Common myeloid progenitor, CD34-positive (primary cell): ENCODE measurements at regions of chr5 and their contacts with region 1.

Region 1: DNA sequence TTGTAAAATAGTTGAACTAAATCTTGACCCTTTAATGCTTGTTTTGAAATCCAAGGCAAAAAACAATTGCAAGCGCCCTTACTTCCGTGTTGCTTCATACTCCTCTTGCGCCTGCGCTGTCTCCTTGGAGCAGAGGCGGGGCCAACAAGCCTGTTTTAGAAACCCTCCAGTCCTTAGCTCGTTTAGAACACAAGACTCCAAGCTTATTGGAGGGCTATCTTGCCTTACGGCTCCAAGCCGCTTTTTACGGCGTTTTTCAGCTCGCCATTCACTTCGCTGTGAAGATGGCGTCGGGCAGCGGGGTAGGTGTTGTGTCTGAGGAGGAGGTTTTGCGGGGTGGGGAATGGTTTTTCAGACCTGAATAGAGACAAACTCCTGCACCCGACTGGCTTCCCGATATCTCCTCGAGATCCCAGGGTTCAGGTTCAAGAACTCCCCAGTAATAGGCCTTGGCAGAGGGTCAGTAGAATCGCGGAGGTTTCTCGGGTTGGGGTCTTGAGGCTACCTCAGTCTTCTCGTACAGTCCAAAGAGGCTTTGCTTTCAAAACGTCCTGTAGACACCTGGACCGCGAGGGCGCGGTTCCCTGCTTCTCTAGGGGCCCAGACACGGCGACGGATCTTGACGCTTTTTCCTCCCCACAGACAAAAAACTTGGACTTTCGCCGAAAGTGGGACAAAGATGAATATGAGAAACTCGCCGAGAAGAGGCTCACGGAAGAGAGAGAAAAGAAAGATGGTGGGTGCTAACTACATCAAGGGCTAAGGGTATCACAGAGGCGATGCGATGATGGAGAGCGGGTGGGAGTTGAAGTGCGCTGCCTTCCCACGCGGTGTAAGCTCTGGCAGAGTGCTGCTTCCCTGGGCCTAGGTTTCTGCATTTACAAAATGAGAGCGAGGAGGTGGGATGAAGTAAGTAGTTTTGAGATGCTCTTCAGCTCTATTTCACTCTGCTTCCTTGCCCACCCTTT is at the start of gene ZMAT2:
- DNase-seq: peak; percentile 99
- H3K4me3 ChIP-seq: peak within 1 kb of the TSS; percentile 84 to 100 (median 98)
- H3K27ac ChIP-seq: peak within 1 kb of the TSS; percentile 83 to 89
- H3K4me1 ChIP-seq: peaks cover 9 to 19% (median 15%) of the 10 kb centered on the region in 4 experiments
- H3K27me3 ChIP-seq: no peaks in the 10 kb centered on the region

Region 2: DNA sequence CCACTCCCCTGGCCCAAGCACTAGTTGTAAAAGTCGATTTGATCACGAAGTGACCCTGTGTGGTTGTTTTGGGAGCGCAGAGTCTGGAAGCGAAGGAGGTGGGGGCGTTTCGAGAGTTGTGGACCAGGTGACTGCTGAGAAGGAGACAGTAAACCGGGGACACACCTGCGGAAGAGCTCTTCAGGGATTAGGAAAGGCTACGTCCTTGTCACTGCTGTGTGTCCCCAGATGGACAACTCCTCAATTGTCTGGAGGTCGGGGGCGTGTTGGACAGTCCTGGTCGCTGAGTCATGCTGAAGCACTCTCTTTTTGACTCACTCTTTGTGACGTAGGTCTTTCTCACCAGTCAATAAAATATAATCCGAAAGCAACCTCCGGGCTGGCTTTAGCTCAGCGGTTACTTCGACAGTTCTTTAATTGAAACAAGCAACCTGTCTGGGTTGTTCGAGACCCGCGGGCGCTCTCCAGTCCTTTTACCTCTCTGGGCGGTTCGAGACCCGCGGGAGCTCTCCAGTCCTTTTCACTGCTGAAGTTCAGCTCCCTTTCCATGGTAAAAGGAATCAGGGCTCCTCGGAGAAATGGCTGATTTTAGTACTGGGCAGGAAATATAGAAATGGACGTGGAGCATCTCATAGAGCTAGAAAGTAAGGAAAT is 10.6 kb after region 1 on chr5:
- CTCF ChIA-PET with region 1: interaction called, 16 read pairs
- POLR2A ChIA-PET with region 1: interaction called, 3 read pairs
- DNase-seq: peak; percentile 97 to 98 (median 97)
- H3K4me3 ChIP-seq: peak overlapping the region; percentile 75 to 99 (median 93)
- H3K27ac ChIP-seq: peak overlapping the region; percentile 99
- H3K4me1 ChIP-seq: peaks cover 0 to 5% (median 2%) of the 10 kb centered on the region in 4 experiments
- H3K27me3 ChIP-seq: no peaks in the 10 kb centered on the region

Region 3: GRCh38 chr5:140734354-140734753 is 33.9 kb after region 1 on chr5:
- CTCF ChIA-PET with region 1: no interaction called
- POLR2A ChIA-PET with region 1: no interaction called
- DNase-seq: no peak
- H3K4me3 ChIP-seq: no peak overlapping the region
- H3K27ac ChIP-seq: no peak overlapping the region
- H3K4me1 ChIP-seq: no peaks in the 10 kb centered on the region
- H3K27me3 ChIP-seq: peaks cover 0 to 2% (median 0%) of the 10 kb centered on the region in 5 experiments

Region 4: DNA sequence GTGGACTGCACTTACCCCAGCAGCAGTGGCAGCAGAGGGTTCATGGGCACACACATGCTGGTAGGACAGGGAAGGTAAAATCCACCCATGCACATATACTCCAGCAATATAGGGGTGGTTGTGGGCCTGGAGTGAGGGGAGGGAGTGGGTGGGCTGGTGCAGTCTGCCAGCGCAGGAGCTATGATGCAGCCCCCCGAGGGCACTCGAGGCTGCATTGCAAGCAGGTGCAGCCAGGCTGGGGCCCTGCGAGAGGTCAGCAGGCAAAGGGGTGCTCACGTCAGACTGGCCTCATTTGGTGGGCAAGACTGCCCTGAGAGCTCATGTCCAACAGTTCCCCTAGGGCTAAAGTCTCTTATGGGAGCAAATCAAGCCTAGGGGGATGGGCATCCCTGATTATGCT is 53.1 kb after region 1 on chr5:
- CTCF ChIA-PET with region 1: no interaction called
- POLR2A ChIA-PET with region 1: no interaction called
- DNase-seq: no peak
- H3K4me3 ChIP-seq: no peak overlapping the region
- H3K27ac ChIP-seq: no peak overlapping the region
- H3K4me1 ChIP-seq: no peaks in the 10 kb centered on the region
- H3K27me3 ChIP-seq: no peaks in the 10 kb centered on the region